ENCODE measurements at regions of chr20 and their contacts with region 1.

Region 1: DNA sequence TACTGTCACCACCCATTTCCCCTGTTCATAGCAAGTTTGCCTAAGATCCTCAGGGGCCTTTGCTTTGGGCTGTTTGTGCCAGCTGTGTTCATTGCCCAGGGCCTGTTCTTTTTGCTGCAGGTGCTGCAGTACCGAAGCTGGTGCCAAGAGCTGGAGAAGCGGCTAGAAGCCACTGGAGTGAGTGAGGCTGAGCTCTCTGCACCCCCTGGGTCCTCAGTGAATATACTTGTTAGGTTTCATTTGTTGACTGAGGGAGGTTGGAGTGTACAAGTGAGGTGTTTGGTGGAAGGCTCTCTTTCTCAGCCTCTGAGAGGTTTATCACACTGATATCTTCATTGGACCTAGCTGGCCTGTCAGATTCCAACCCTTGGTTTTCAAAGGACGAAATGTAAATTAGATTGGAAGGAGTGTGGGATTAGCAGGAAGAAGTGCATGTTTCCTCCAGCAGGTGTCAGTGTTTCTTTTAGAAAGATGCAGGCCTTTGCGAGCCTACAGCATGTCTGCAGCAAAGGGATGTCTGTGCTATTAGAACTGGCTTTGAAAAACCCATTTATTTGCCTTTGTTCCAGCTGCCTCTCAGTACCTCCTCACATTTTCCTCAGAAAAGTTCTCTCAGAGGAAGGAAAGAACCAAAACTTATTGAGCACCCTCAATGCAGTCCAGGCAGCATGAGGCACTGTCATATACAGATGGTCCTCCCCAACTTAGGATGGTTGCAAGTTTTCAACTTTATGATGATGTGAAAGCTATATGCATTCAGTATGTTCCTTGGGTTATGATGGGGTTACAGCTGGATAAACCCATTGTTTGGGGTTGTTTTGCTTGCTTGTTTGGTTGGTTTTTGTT is 8.3 kb downstream of the CEP250 start:
- DNase-seq: peak; percentile 79
- H3K4me3 ChIP-seq: no peak overlapping the region
- H3K27ac ChIP-seq: no peak overlapping the region
- H3K4me1 ChIP-seq: peaks cover 32% of the 10 kb centered on the region
- H3K27me3 ChIP-seq: no peaks in the 10 kb centered on the region
- CTCF ChIP-seq: peak; percentile 70 to 76
- POLR2A ChIP-seq: no peak

Region 2: DNA sequence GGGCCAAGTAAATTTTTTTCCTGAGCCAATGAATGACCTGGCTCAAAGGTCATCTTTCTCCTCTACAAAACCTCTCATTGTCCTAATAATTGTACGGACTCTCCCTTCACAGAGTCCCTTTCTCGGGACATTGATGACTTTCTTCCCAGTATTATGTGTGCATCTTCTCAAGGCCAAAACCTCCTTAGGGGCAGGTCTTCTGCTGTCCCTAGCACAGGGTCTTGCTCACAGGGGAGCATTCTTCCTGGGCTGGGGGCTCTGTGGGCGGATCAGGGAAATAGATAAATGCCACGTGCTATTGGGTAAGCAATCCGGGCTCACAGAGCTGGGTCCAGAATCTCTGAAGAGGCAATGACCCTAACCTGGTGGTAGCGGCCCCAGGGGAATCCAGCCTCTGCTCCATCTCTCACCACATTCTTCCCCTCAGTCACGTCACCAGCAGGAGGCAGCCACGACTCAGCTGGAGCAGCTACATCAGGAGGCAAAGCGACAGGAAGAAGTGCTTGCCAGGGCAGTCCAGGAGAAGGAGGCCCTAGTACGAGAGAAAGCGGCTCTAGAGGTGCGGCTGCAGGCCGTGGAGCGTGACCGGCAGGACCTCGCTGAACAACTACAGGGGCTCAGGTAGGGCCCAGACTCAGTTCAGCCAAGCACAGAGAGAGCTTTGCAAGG is 15.3 kb after region 1 on chr20:
- CTCF ChIA-PET with region 1: interaction called, 10 read pairs
- POLR2A ChIA-PET with region 1: interaction called, 3 read pairs
- dilution Hi-C with region 1: no loop called
- intact Hi-C with region 1: no loop called
- DNase-seq: no peak
- H3K4me3 ChIP-seq: no peak overlapping the region
- H3K27ac ChIP-seq: no peak overlapping the region
- H3K4me1 ChIP-seq: no peaks in the 10 kb centered on the region
- H3K27me3 ChIP-seq: no peaks in the 10 kb centered on the region
- CTCF ChIP-seq: peak in 1 of 2 donors; percentile 18
- POLR2A ChIP-seq: no peak

Region 3: GRCh38 chr20:35511814-35512420 is 48.2 kb after region 1 on chr20:
- CTCF ChIA-PET with region 1: interaction called, 3 read pairs
- POLR2A ChIA-PET with region 1: no interaction called
- dilution Hi-C with region 1: no loop called
- intact Hi-C with region 1: loop called (anchors 5 kb)
- DNase-seq: peak; percentile 56
- H3K4me3 ChIP-seq: no peak overlapping the region
- H3K27ac ChIP-seq: no peak overlapping the region
- H3K4me1 ChIP-seq: no peaks in the 10 kb centered on the region
- H3K27me3 ChIP-seq: no peaks in the 10 kb centered on the region
- CTCF ChIP-seq: peak; percentile 41 to 52
- POLR2A ChIP-seq: no peak

Region 4: GRCh38 chr20:35601008-35601973 is 137.6 kb after region 1 on chr20:
- CTCF ChIA-PET with region 1: interaction called, 3 read pairs
- POLR2A ChIA-PET with region 1: no interaction called
- dilution Hi-C with region 1: no loop called
- intact Hi-C with region 1: loop called (anchors 5 kb)
- DNase-seq: peak; percentile 79
- H3K4me3 ChIP-seq: peak overlapping the region; percentile 1 to 21 (median 2)
- H3K27ac ChIP-seq: no peak overlapping the region
- H3K4me1 ChIP-seq: peaks cover 8% of the 10 kb centered on the region
- H3K27me3 ChIP-seq: peaks cover 13 to 15% of the 10 kb centered on the region in 2 experiments
- CTCF ChIP-seq: peak; percentile 26 to 52
- POLR2A ChIP-seq: no peak

Region 5: DNA sequence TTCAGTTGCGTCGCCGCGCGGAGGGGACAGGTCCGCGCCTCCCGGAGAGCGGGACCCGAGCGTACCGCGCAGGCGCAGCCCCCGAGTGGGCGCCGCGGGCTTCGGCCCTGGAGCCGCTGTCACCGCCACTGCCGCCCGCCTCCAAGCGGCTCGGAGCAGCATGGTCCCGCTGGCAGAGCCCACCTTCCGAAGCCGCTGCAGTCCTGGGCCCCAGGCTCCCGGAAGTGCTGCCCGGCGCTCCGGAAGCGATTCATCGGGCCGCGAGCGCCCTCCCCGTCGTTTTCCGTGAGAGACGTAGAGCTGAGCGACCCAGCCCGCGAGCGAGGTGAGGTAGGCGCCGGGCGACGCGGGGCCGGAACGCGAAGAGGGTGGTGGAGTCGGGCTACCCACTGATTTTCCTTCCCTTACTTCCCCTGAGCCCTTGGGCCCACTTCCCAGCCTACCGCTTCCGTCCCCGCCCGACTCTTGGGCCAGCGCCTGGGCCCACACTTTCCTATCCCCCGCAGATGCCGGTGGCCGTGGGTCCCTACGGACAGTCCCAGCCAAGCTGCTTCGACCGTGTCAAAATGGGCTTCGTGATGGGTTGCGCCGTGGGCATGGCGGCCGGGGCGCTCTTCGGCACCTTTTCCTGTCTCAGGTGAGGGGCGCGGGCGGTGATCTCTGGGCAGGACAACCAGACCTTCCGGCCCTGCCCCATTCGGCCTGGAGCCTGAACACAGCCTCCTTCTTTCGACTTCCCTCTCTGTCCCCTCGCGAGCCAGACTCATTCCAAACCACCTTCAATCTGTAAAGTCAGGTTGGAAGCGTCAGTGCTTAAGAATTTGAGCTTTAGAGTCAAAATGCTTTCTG is 235.7 kb after region 1 on chr20 and contains the starts of genes NFS1 and ROMO1:
- CTCF ChIA-PET with region 1: interaction called, 3 read pairs
- POLR2A ChIA-PET with region 1: no interaction called
- dilution Hi-C with region 1: no loop called
- intact Hi-C with region 1: loop called (anchors 1 kb)
- DNase-seq: peak; percentile 89
- H3K4me3 ChIP-seq: peak within 1 kb of the TSS; percentile 44 to 91 (median 87)
- H3K27ac ChIP-seq: peak within 1 kb of the TSS; percentile 65
- H3K4me1 ChIP-seq: peaks cover 17% of the 10 kb centered on the region
- H3K27me3 ChIP-seq: no peaks in the 10 kb centered on the region
- CTCF ChIP-seq: peak; percentile 14 to 43
- POLR2A ChIP-seq: peak; percentile 95
- total RNA-seq, gene NFS1: 24.0 and 25.1 TPM in 2 replicates
- total RNA-seq, gene ROMO1: 169 and 174 TPM in 2 replicates

Region 6: DNA sequence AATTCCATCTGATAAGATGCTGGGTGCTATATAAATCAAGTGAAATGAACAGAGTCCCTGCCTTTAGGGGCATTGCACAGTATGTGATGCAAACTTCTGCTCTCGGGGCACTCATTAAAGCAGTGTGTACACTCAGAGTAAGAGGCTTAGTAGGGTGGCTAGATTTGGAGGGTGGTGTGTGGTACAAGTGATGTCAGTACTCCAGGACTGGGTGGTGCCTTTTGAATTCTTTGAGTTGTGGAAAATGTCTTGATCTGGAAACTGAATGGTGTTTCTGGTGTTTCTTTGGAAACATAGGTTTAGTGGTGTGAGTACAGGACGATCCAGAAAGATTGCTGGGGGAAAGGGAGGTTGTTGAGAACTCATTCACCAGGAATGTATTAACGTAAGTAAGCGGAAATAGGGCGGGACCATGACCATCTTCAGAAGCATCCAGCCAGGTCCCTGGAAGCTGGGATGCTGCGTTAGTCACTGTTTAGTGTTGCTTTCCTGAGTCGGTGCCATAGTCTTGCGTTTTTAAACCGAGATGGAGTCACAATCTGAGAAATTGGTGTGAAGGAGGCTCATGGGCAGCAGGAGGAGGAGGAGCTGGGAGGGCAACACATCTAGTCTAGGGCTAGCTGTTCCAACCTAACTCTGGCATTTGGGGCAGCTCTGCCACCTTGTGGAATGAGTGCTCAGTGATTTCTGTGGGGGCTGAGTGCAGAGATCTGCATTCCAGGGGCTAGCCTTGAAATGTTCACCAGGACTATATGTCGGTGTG is 420.3 kb after region 1 on chr20:
- CTCF ChIA-PET with region 1: no interaction called
- POLR2A ChIA-PET with region 1: no interaction called
- dilution Hi-C with region 1: no loop called
- intact Hi-C with region 1: loop called (anchors 1 kb)
- DNase-seq: peak; percentile 88
- H3K4me3 ChIP-seq: peak overlapping the region in 1 of 3 experiments; percentile 1
- H3K27ac ChIP-seq: peak overlapping the region; percentile 95
- H3K4me1 ChIP-seq: peaks cover 13% of the 10 kb centered on the region
- H3K27me3 ChIP-seq: no peaks in the 10 kb centered on the region
- CTCF ChIP-seq: peak; percentile 72 to 77
- POLR2A ChIP-seq: peak; percentile 52

Measured in endothelial cell of umbilical vein (primary cell).